ENCODE measurements at regions of chr17 and their contacts with region 1.

Region 1: GRCh38 chr17:55584050-55584685 is 72.9 kb upstream of the SMIM36 start:
- DNase-seq: peak; percentile 71
- H3K4me3 ChIP-seq: no peak overlapping the region
- H3K27ac ChIP-seq: no peak overlapping the region
- H3K4me1 ChIP-seq: peaks cover 9% of the 10 kb centered on the region
- H3K27me3 ChIP-seq: peaks cover 0 to 2% of the 10 kb centered on the region in 2 experiments
- CTCF ChIP-seq: no peak
- POLR2A ChIP-seq: no peak

Region 2: DNA sequence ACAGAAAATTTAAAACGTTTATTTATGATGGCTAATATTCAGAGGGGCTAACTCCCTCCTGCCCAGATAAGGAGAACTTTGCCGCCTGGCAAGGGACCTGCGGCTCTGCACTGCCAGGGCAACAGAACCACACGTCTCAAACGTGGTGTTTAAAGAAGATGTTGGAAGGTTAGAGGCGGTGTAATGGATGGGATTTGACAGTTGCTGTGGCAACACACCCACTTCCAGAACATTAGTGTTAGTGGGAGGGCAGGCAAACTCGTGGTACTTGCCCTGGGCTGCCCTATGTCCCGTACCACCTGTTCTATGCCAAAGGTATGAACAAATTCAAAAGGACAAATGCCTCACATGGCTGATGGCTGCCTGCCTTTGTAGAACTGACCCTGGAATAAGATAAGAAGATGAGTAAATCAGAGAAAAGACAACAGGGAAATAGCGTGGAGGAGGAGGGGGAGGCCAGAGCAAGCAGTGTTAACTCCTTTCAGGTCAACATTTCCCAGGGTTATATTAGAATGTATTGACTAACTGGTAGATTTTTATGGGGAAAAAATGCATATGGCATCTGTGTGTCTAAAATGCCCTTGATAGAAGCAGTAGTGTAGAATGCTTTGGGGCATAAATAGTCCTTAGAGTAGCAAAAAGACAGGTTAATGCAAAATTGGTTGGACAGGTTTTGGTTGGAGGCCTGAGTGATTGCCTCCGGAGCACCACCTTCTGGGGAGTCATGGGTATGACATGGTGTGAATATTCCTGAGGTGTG is 288.6 kb before region 1 on chr17:
- CTCF ChIA-PET with region 1: no interaction called
- POLR2A ChIA-PET with region 1: no interaction called
- dilution Hi-C with region 1: no loop called
- intact Hi-C with region 1: no loop called
- DNase-seq: peak; percentile 65
- H3K4me3 ChIP-seq: no peak overlapping the region
- H3K27ac ChIP-seq: no peak overlapping the region
- H3K4me1 ChIP-seq: no peaks in the 10 kb centered on the region
- H3K27me3 ChIP-seq: no peaks in the 10 kb centered on the region
- CTCF ChIP-seq: peak; percentile 68 to 82
- POLR2A ChIP-seq: no peak

Region 3: GRCh38 chr17:55437159-55437605 is 147.0 kb before region 1 on chr17:
- CTCF ChIA-PET with region 1: no interaction called
- POLR2A ChIA-PET with region 1: no interaction called
- dilution Hi-C with region 1: no loop called
- intact Hi-C with region 1: no loop called
- DNase-seq: no peak
- H3K4me3 ChIP-seq: no peak overlapping the region
- H3K27ac ChIP-seq: no peak overlapping the region
- H3K4me1 ChIP-seq: peaks cover 7% of the 10 kb centered on the region
- H3K27me3 ChIP-seq: peaks cover 0 to 3% of the 10 kb centered on the region in 2 experiments
- CTCF ChIP-seq: no peak
- POLR2A ChIP-seq: no peak

Region 4: GRCh38 chr17:55513885-55514591 is 70.1 kb before region 1 on chr17:
- CTCF ChIA-PET with region 1: no interaction called
- POLR2A ChIA-PET with region 1: no interaction called
- dilution Hi-C with region 1: no loop called
- intact Hi-C with region 1: no loop called
- DNase-seq: peak; percentile 73
- H3K4me3 ChIP-seq: no peak overlapping the region
- H3K27ac ChIP-seq: no peak overlapping the region
- H3K4me1 ChIP-seq: no peaks in the 10 kb centered on the region
- H3K27me3 ChIP-seq: peaks cover 1 to 19% of the 10 kb centered on the region in 2 experiments
- CTCF ChIP-seq: peak; percentile 77 to 82
- POLR2A ChIP-seq: no peak

Region 5: GRCh38 chr17:55533608-55534007 is 50.6 kb before region 1 on chr17:
- CTCF ChIA-PET with region 1: interaction called, 6 read pairs
- POLR2A ChIA-PET with region 1: no interaction called
- dilution Hi-C with region 1: no loop called
- intact Hi-C with region 1: loop called (anchors 2 kb)
- DNase-seq: peak; percentile 28
- H3K4me3 ChIP-seq: no peak overlapping the region
- H3K27ac ChIP-seq: no peak overlapping the region
- H3K4me1 ChIP-seq: peaks cover 18% of the 10 kb centered on the region
- H3K27me3 ChIP-seq: no peaks in the 10 kb centered on the region
- CTCF ChIP-seq: no peak
- POLR2A ChIP-seq: no peak

Region 6: GRCh38 chr17:55693254-55694216 is 109.4 kb after region 1 on chr17:
- CTCF ChIA-PET with region 1: no interaction called
- POLR2A ChIA-PET with region 1: no interaction called
- dilution Hi-C with region 1: no loop called
- intact Hi-C with region 1: no loop called
- DNase-seq: no peak
- H3K4me3 ChIP-seq: no peak overlapping the region
- H3K27ac ChIP-seq: no peak overlapping the region
- H3K4me1 ChIP-seq: no peaks in the 10 kb centered on the region
- H3K27me3 ChIP-seq: peaks cover 2 to 6% of the 10 kb centered on the region in 2 experiments
- CTCF ChIP-seq: no peak
- POLR2A ChIP-seq: no peak

Region 7: DNA sequence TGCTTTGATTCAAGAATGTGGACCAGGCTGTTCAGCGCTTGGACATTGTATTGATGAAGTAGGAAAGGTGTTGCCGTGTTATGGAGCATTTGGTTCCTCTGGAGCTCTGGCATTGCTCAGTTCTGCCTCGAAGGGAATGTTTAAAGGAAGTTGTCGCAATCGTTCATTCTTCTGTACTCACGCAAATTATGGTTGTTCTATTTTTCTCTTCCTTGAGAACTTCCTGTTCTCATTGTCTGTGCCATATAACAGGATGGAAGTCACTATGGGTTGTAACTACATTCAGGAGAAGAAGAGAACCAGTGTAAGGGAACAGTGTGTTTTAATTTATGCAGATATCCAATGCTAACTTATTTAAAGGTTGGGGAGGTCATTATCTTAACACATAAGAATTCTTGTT is 179.7 kb after region 1 on chr17:
- CTCF ChIA-PET with region 1: no interaction called
- POLR2A ChIA-PET with region 1: no interaction called
- dilution Hi-C with region 1: no loop called
- intact Hi-C with region 1: loop called (anchors 5 kb)
- DNase-seq: peak; percentile 71
- H3K4me3 ChIP-seq: no peak overlapping the region
- H3K27ac ChIP-seq: peak overlapping the region; percentile 59
- H3K4me1 ChIP-seq: peaks cover 22% of the 10 kb centered on the region
- H3K27me3 ChIP-seq: no peaks in the 10 kb centered on the region
- CTCF ChIP-seq: no peak
- POLR2A ChIP-seq: no peak

Measured in endothelial cell of umbilical vein (primary cell).